HepG2 (cell line): ENCODE measurements at regions of chr1 and their contacts with region 1.

Region 1: GRCh38 chr1:246907472-246907871 is 24.3 kb downstream of the AHCTF1 start:
- DNase-seq: peak; percentile 69
- ATAC-seq: peak; percentile 75
- H3K4me3 ChIP-seq: no peak overlapping the region
- H3K27ac ChIP-seq: peak overlapping the region; percentile 48
- H3K4me1 ChIP-seq: peaks cover 15% of the 10 kb centered on the region
- H3K27me3 ChIP-seq: no peaks in the 10 kb centered on the region
- CTCF ChIP-seq: peak; percentile 72
- EP300 ChIP-seq: no peak
- POLR2A ChIP-seq: no peak
- RAD21 ChIP-seq: peak; percentile 71

Region 2: DNA sequence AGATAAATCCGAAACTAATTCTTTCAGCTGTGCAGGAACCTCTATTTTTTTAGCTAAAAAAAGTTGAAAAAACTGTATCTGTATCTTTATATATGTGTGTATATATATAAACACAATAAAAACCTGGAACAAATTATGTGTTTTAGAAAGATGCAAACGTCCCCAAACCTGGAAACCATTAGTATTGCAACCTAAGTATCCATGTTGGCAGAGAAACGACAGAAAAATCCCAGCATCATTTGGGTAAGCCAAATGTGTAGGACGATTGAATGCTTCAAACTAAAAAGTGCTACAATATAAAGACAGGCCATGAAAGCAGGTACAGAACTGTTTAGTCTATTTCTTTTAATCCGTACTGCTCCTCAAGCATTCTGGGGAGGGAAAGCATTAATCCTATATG is 63.6 kb before region 1 on chr1:
- CTCF ChIA-PET with region 1: no interaction called
- POLR2A ChIA-PET with region 1: no interaction called
- in situ Hi-C with region 1: no loop called
- intact Hi-C with region 1: no loop called
- DNase-seq: no peak
- ATAC-seq: no peak
- H3K4me3 ChIP-seq: no peak overlapping the region
- H3K27ac ChIP-seq: no peak overlapping the region
- H3K4me1 ChIP-seq: no peaks in the 10 kb centered on the region
- H3K27me3 ChIP-seq: no peaks in the 10 kb centered on the region; a peak in 1 of 5 replicates
- CTCF ChIP-seq: no peak
- EP300 ChIP-seq: no peak
- POLR2A ChIP-seq: no peak
- RAD21 ChIP-seq: no peak

Region 3: DNA sequence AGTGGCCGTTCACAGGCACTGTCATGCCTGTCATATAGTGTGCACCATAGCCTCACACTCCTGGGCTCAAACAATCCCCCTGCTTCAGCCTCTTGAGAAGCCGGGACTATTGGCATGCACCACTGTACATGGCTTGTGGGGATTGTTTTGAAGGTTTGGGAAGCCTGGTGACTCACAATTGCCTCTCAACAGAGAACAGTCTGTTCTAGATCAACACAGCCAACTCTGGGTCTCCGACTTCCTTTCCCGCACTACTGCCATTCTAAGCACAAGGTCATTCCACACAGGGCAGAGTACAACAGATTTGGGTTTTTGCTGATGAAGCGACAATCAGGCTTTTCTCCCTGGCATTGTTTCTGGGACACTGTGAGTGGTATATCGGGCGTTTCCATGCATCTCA is 39.8 kb after region 1 on chr1:
- CTCF ChIA-PET with region 1: no interaction called
- POLR2A ChIA-PET with region 1: no interaction called
- in situ Hi-C with region 1: no loop called
- intact Hi-C with region 1: loop called (anchors 1 kb)
- DNase-seq: peak; percentile 92
- ATAC-seq: peak; percentile 97
- H3K4me3 ChIP-seq: no peak overlapping the region
- H3K27ac ChIP-seq: peak overlapping the region; percentile 43
- H3K4me1 ChIP-seq: peaks cover 19% of the 10 kb centered on the region
- H3K27me3 ChIP-seq: no peaks in the 10 kb centered on the region
- CTCF ChIP-seq: no peak
- EP300 ChIP-seq: 0 out of 4 replicates have a peak, but pooled peaks of 1 of the 2 experiments have one; percentile 13
- POLR2A ChIP-seq: no peak
- RAD21 ChIP-seq: no peak

Region 4: DNA sequence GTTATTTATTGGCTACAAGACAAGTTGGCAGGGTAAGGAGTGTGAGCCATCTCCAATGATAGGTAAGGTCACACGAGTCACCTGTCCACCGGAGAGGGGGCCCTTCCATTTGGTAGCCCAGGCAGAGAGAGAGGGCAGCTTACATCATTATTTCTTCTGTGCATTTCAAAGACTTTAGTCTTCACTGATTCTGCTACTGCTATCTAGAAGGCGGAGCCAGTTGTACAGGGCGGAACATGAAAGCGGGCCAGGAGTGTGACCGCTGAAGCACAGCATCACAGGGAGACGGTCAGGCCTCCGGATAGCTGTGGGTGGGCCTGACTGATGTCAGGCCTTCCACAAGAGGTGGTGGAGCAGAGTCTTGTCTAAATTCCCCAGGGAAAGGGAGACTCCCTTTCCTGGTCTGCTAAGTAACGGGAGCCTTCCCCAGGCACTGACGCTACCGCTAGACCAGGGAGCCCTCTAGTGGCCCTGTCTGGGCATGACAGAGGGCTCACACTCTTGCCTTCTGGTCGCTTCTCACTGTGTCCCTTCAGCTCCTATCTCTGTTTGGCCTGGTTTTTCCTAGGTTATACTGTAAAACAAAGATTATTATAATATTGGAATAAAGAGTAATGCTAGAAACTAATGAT is 63.7 kb after region 1 on chr1:
- CTCF ChIA-PET with region 1: interaction called, 9 read pairs
- POLR2A ChIA-PET with region 1: no interaction called
- in situ Hi-C with region 1: no loop called
- intact Hi-C with region 1: loop called (anchors 1 kb)
- DNase-seq: peak; percentile 23
- ATAC-seq: peak; percentile 41; the same call in 1 of the 3 replicates
- H3K4me3 ChIP-seq: no peak overlapping the region
- H3K27ac ChIP-seq: no peak overlapping the region
- H3K4me1 ChIP-seq: no peaks in the 10 kb centered on the region
- H3K27me3 ChIP-seq: no peaks in the 10 kb centered on the region
- CTCF ChIP-seq: peak; percentile 86
- EP300 ChIP-seq: no peak
- POLR2A ChIP-seq: no peak
- RAD21 ChIP-seq: peak; percentile 82